Activated B cell treated with CpG ODN at 0.5 μM for 24 hours (primary cell): ENCODE measurements at regions of chr3 and their contacts with region 1.

Region 1: DNA sequence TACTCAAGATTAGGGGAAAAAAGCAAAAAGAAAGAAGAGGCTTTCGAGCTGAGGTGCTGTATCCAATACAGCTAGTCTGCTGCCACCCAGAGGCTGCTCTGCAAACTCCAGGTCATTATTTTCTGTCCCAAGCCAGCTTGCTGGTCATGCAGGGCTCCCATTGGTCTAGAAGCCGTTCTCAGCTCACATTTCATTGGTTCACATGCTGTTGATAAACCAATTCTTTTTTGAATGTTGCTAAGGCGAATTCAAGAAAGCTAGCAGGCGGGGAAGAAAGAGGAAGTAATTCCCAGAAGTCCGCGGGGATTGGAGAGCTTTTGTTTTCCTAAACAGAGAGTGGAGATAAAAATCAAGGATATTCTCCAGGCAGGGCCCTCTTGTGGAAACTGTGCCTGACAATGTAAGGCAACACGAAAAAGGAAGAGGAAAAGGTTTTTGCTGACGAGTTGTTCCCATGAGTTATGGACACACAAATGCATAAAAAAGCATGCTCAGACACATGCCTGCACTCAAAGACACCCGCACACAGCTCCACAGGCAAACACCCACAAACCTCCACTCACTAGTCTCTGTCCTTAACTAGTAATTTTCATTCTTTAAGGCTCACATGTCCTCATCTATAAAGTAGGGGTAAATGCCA is 33.4 kb downstream of the FSTL1 start:
- DNase-seq: peak; percentile 61
- ATAC-seq: peak; percentile 100
- H3K4me3 Mint-ChIP-seq: peak overlapping the region; percentile 83
- H3K27ac Mint-ChIP-seq: peak overlapping the region; percentile 37
- H3K4me1 Mint-ChIP-seq: peaks cover 16% of the 10 kb centered on the region
- H3K27me3 Mint-ChIP-seq: no peaks in the 10 kb centered on the region
- CTCF ChIP-seq: no peak

Region 2: GRCh38 chr3:120399372-120399771 is 18.0 kb before region 1 on chr3:
- CTCF ChIA-PET with region 1: interaction called, 11 read pairs
- POLR2A ChIA-PET with region 1: no interaction called
- intact Hi-C with region 1: no loop called
- DNase-seq: no peak
- ATAC-seq: peak; percentile 82
- H3K4me3 Mint-ChIP-seq: no peak overlapping the region
- H3K27ac Mint-ChIP-seq: no peak overlapping the region
- H3K4me1 Mint-ChIP-seq: peaks cover 32% of the 10 kb centered on the region
- H3K27me3 Mint-ChIP-seq: no peaks in the 10 kb centered on the region
- CTCF ChIP-seq: no peak

Region 3: DNA sequence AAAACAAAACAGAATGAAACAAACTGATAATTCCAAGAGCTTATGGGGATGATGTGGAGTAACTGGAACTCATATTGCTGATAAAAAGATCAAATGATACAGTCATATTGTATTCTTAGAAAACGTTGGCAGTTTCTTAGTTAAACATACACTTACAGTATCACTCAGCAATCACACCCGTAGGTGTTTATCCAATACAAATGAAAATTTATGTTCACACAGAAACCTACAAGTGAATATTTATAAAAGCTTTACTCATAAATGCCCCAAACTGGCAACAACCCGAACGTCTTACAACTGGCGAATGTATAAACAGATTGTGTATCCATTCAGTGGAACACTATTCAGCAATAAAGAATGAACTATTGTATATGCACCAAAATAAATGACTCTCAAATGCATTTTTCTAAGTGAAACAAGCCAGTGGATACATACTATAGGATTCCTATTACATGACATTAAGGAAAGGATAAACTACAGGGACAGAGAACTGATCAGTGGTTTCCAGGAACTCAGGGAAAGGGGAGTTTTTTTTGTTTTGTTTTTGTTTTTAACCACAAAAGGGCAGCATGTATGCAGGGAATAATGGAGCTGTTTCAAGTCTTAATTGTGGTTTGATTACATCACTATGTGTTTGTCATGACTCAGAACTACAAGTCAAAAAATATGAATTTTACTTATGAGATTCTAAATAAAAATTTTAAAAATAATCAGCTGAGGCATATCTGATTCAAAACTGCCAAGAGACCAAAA is 107.0 kb after region 1 on chr3:
- CTCF ChIA-PET with region 1: no interaction called
- POLR2A ChIA-PET with region 1: no interaction called
- intact Hi-C with region 1: no loop called
- DNase-seq: no peak
- ATAC-seq: no peak
- H3K4me3 Mint-ChIP-seq: no peak overlapping the region
- H3K27ac Mint-ChIP-seq: no peak overlapping the region
- H3K4me1 Mint-ChIP-seq: no peaks in the 10 kb centered on the region
- H3K27me3 Mint-ChIP-seq: peaks cover 6% of the 10 kb centered on the region
- CTCF ChIP-seq: no peak